WTC11 (cell line): ENCODE measurements at regions of chr5 and their contacts with region 1.

Region 1: GRCh38 chr5:174844971-174845370 is 120.6 kb downstream of the MSX2 start:
- DNase-seq: no peak
- ATAC-seq: no peak
- H3K4me3 Mint-ChIP-seq: no peak overlapping the region
- H3K27ac Mint-ChIP-seq: no peak overlapping the region
- H3K4me1 Mint-ChIP-seq: peaks cover 14% of the 10 kb centered on the region
- H3K27me3 Mint-ChIP-seq: peaks cover 11% of the 10 kb centered on the region
- CTCF ChIP-seq: no peak

Region 2: DNA sequence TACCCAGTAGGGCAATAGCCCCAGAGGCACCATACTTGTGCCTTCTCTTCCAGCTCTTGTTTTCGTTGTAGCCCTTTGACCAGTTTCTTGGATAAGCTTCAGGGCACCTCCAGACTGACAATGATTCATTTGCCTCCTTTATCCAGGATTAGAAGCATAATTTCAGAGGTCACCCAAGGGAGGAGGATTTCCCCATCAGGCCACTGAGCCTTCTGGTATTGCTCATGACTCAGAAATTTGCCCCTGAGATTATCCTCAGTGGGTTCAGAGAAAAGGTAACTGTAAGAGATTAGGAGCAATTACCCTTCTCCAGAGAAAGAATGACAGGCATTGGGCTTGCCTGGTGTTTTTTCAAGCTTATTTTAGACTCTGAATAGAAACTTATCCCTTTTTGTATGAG is 27.3 kb after region 1 on chr5:
- CTCF ChIA-PET with region 1: no interaction called
- POLR2A ChIA-PET with region 1: interaction called, 10 read pairs
- DNase-seq: no peak
- ATAC-seq: no peak
- H3K4me3 Mint-ChIP-seq: no peak overlapping the region
- H3K27ac Mint-ChIP-seq: no peak overlapping the region
- H3K4me1 Mint-ChIP-seq: no peaks in the 10 kb centered on the region
- H3K27me3 Mint-ChIP-seq: no peaks in the 10 kb centered on the region
- CTCF ChIP-seq: no peak

Region 3: DNA sequence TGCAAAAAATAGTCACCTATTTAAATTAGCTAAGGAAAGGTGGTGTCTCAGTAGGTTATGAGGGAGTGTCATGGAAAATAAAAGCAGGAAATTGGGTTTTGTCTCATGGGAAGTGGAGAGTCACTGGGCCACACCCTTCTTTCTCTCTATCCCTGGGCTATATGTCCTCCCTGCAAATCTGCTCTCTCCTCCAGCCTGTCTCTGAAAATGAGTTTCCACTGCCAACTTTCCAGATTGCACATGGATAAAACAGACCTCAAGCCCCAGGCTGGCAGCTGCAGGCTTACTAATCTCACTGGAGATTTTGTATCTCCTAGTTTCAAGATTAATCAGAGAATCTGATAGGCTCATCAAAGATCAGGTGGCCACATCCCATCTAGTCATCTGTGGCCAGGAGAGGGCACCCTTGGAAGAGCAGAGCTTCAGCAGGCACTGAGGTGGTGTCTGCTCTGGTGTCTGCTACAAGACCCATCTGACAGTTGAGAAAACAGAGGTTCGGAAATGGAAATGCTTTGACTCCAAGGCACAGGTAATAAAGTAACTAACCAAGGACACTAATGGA is 58.3 kb after region 1 on chr5:
- CTCF ChIA-PET with region 1: no interaction called
- POLR2A ChIA-PET with region 1: no interaction called
- DNase-seq: no peak
- ATAC-seq: peak; percentile 65
- H3K4me3 Mint-ChIP-seq: no peak overlapping the region
- H3K27ac Mint-ChIP-seq: no peak overlapping the region
- H3K4me1 Mint-ChIP-seq: no peaks in the 10 kb centered on the region
- H3K27me3 Mint-ChIP-seq: no peaks in the 10 kb centered on the region; the same call in 1 of the 2 replicates
- CTCF ChIP-seq: no peak